B cell (primary cell): ENCODE measurements at regions of chr10 and their contacts with region 1.

Region 1: DNA sequence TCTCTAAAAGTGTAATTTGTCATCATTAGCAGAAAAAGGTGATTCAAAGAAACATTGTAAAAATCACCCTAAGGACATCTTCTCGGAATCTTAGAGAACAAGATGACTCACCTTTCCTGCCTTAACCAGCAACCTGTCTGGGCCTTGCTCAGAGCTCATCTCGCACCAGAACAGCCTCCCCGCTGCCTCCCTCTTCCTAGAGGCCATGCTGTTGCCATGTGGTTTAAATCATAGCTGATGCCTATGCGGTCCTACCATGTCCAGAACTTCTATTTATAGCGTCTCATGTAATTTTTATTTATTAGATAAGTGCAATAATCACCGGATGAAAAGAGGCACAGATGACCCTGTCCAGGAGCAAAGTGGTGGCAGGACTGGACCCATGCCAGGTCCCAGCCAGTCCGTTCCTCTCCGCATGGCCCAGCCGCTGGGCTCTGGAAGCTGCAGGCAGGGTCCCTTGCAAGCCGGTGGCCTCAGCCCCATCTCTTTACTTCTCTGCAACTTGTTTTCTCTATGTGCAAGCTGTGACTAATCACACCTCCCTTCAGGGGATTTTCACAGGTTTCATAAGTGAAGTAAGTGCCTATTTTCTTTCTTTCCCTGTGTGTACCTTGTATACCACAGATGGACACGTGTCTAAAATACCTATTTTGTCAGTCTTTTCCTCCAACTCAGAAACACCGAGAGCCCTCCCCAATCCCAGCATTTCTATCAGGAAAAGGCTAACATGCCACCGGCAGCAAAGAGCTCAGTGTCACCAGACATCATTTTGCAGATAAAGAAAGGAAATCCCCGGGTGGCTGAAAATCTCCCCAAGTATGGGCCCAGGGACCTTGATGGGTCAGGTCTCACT is 27.1 kb downstream of the KLF6 start:
- DNase-seq: peak; percentile 76
- ATAC-seq: peak; percentile 68
- H3K4me3 ChIP-seq: peak overlapping the region in 1 of 5 experiments; percentile 18
- H3K4me3 Mint-ChIP-seq: peak overlapping the region; percentile 67
- H3K27ac ChIP-seq: peak overlapping the region; percentile 60 to 63
- H3K27ac Mint-ChIP-seq: peak overlapping the region; percentile 92
- H3K4me1 ChIP-seq: peaks cover 49 to 55% of the 10 kb centered on the region in 2 donors
- H3K4me1 Mint-ChIP-seq: peaks cover 59% of the 10 kb centered on the region
- H3K27me3 ChIP-seq: no peaks in the 10 kb centered on the region
- H3K27me3 Mint-ChIP-seq: no peaks in the 10 kb centered on the region
- CTCF ChIP-seq: no peak

Region 2: GRCh38 chr10:2714597-2714996 is 1043.3 kb before region 1 on chr10:
- CTCF ChIA-PET with region 1: no interaction called
- POLR2A ChIA-PET with region 1: no interaction called
- intact Hi-C with region 1: no loop called
- DNase-seq: no peak
- ATAC-seq: no peak
- H3K4me3 ChIP-seq: no peak overlapping the region
- H3K4me3 Mint-ChIP-seq: no peak overlapping the region
- H3K27ac ChIP-seq: no peak overlapping the region
- H3K27ac Mint-ChIP-seq: no peak overlapping the region
- H3K4me1 ChIP-seq: no peaks in the 10 kb centered on the region
- H3K4me1 Mint-ChIP-seq: no peaks in the 10 kb centered on the region
- H3K27me3 ChIP-seq: peaks cover 0 to 3% (median 0%) of the 10 kb centered on the region in 4 experiments
- H3K27me3 Mint-ChIP-seq: no peaks in the 10 kb centered on the region
- CTCF ChIP-seq: no peak

Region 3: GRCh38 chr10:3775696-3776551 is 18.1 kb after region 1 on chr10:
- CTCF ChIA-PET with region 1: interaction called, 9 read pairs
- POLR2A ChIA-PET with region 1: interaction called, 3 read pairs
- intact Hi-C with region 1: loop called (anchors 2 kb)
- DNase-seq: peak; percentile 53
- ATAC-seq: peak; percentile 29
- H3K4me3 ChIP-seq: no peak overlapping the region
- H3K4me3 Mint-ChIP-seq: no peak overlapping the region
- H3K27ac ChIP-seq: peak overlapping the region; percentile 31 to 63
- H3K27ac Mint-ChIP-seq: peak overlapping the region; percentile 57
- H3K4me1 ChIP-seq: peaks cover 12 to 25% of the 10 kb centered on the region in 2 donors
- H3K4me1 Mint-ChIP-seq: peaks cover 38% of the 10 kb centered on the region
- H3K27me3 ChIP-seq: no peaks in the 10 kb centered on the region
- H3K27me3 Mint-ChIP-seq: no peaks in the 10 kb centered on the region
- CTCF ChIP-seq: no peak

Region 4: DNA sequence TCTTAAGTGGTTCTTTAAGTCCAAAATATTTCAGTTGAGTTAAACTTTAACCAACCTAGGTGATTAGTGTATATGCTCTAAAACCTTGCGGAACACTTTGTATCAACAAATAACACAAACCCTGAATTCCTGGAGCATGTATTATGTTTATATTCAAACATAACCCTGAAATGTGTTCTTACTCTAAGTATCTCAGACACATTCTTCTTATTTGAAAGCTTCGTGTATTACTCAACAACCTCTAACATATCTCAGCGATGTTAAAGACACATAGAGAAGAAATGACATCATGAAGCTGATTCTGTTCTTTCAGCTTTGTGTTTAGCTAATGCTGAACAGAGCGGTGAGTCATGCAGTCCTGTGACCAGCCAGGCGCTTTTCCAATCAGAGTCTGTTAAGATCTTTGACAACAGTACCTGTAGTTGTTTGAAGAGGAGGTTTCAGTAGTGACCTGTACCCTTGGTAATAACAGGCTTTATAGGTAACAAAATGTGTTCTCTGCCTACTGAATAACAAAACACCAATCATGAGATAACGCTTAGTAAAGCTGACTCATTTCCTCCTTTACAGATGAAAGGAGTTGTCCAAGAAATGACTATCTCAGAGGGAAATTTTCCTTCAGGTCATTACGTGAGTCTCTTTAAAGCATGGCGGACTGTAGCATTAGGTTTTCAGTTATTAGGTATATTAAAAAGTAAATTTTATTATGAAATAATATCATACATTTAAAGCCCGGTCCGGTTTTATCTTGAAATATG is 94.5 kb after region 1 on chr10:
- CTCF ChIA-PET with region 1: no interaction called
- POLR2A ChIA-PET with region 1: no interaction called
- intact Hi-C with region 1: no loop called
- DNase-seq: peak; percentile 53
- ATAC-seq: peak; percentile 70
- H3K4me3 ChIP-seq: no peak overlapping the region
- H3K4me3 Mint-ChIP-seq: peak overlapping the region; percentile 50
- H3K27ac ChIP-seq: peak overlapping the region; percentile 66 to 74
- H3K27ac Mint-ChIP-seq: peak overlapping the region; percentile 85
- H3K4me1 ChIP-seq: peaks cover 15 to 22% of the 10 kb centered on the region in 2 donors
- H3K4me1 Mint-ChIP-seq: peaks cover 32% of the 10 kb centered on the region
- H3K27me3 ChIP-seq: no peaks in the 10 kb centered on the region
- H3K27me3 Mint-ChIP-seq: no peaks in the 10 kb centered on the region
- CTCF ChIP-seq: no peak

Region 5: GRCh38 chr10:3902054-3902808 is 144.4 kb after region 1 on chr10:
- CTCF ChIA-PET with region 1: no interaction called
- POLR2A ChIA-PET with region 1: no interaction called
- intact Hi-C with region 1: loop called (anchors 2 kb)
- DNase-seq: peak; percentile 91
- ATAC-seq: peak; percentile 84
- H3K4me3 ChIP-seq: peak overlapping the region in 1 of 5 experiments; percentile 30
- H3K4me3 Mint-ChIP-seq: peak overlapping the region; percentile 57
- H3K27ac ChIP-seq: peak overlapping the region; percentile 94 to 99
- H3K27ac Mint-ChIP-seq: peak overlapping the region; percentile 94
- H3K4me1 ChIP-seq: peaks cover 50 to 64% of the 10 kb centered on the region in 2 donors
- H3K4me1 Mint-ChIP-seq: peaks cover 52% of the 10 kb centered on the region
- H3K27me3 ChIP-seq: no peaks in the 10 kb centered on the region
- H3K27me3 Mint-ChIP-seq: no peaks in the 10 kb centered on the region
- CTCF ChIP-seq: peak; percentile 24

Region 6: GRCh38 chr10:4131407-4132228 is 373.8 kb after region 1 on chr10:
- CTCF ChIA-PET with region 1: no interaction called
- POLR2A ChIA-PET with region 1: no interaction called
- intact Hi-C with region 1: loop called (anchors 5 kb)
- DNase-seq: peak; percentile 79
- ATAC-seq: peak; percentile 71
- H3K4me3 ChIP-seq: peak overlapping the region in 4 of 5 experiments; percentile 0 to 51 (median 32)
- H3K4me3 Mint-ChIP-seq: no peak overlapping the region
- H3K27ac ChIP-seq: peak overlapping the region; percentile 21 to 71
- H3K27ac Mint-ChIP-seq: no peak overlapping the region
- H3K4me1 ChIP-seq: peaks cover 70 to 71% of the 10 kb centered on the region in 2 donors
- H3K4me1 Mint-ChIP-seq: peaks cover 45% of the 10 kb centered on the region
- H3K27me3 ChIP-seq: no peaks in the 10 kb centered on the region
- H3K27me3 Mint-ChIP-seq: no peaks in the 10 kb centered on the region
- CTCF ChIP-seq: no peak

Region 7: GRCh38 chr10:4359003-4359402 is 601.1 kb after region 1 on chr10:
- CTCF ChIA-PET with region 1: no interaction called
- POLR2A ChIA-PET with region 1: interaction called, 10 read pairs
- intact Hi-C with region 1: no loop called
- DNase-seq: no peak
- ATAC-seq: no peak
- H3K4me3 ChIP-seq: no peak overlapping the region
- H3K4me3 Mint-ChIP-seq: no peak overlapping the region
- H3K27ac ChIP-seq: no peak overlapping the region
- H3K27ac Mint-ChIP-seq: no peak overlapping the region
- H3K4me1 ChIP-seq: no peaks in the 10 kb centered on the region
- H3K4me1 Mint-ChIP-seq: no peaks in the 10 kb centered on the region
- H3K27me3 ChIP-seq: peaks cover 0 to 4% (median 1%) of the 10 kb centered on the region in 4 experiments
- H3K27me3 Mint-ChIP-seq: peaks cover 15% of the 10 kb centered on the region
- CTCF ChIP-seq: no peak